ENCODE measurements at regions of chr5 and their contacts with region 1.

Region 1: GRCh38 chr5:113294311-113295110 is 140.3 kb downstream of the TSSK1B start:
- DNase-seq: peak; percentile 86
- H3K4me3 Mint-ChIP-seq: peak overlapping the region; percentile 93
- H3K27ac Mint-ChIP-seq: peak overlapping the region; percentile 79
- H3K4me1 Mint-ChIP-seq: peaks cover 27% of the 10 kb centered on the region
- H3K27me3 Mint-ChIP-seq: peaks cover 45% of the 10 kb centered on the region

Region 2: GRCh38 chr5:113022661-113023060 is 271.9 kb before region 1 on chr5:
- CTCF ChIA-PET with region 1: no interaction called
- POLR2A ChIA-PET with region 1: interaction called, 18 read pairs
- DNase-seq: no peak
- H3K4me3 Mint-ChIP-seq: peak overlapping the region; percentile 40
- H3K27ac Mint-ChIP-seq: peak overlapping the region; percentile 86
- H3K4me1 Mint-ChIP-seq: peaks cover 68% of the 10 kb centered on the region
- H3K27me3 Mint-ChIP-seq: no peaks in the 10 kb centered on the region

Region 3: DNA sequence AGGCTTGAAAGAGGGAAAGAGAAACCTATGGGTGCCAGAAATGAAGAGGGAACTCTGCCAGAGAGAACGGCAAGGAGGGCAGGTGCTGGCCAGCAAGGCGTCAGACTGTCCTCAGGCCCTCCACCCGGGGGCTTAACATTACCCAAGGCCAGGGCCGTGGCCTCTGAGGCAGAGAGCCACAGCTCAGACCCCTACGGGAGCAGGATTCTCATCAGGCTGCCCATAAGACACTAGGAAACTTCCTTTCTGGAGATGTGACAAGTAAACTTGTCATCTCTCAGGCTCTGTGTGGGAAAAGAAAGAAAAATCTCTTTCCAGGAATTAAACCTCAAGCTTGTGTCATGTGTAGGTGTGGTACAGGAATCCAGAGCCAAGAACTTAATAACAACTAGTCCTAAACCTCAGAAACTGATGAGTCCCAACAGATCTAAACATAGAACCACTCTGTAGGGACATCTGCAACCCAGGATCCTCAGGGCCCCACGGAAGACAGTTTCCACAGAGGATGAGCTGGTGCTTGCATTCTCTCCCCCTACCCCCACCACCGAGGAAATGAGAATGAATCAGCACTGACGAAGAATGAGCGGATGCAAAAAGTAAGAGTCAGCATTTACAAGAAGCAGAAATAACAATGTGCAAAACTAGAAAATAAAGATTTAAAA is 243.7 kb before region 1 on chr5:
- CTCF ChIA-PET with region 1: no interaction called
- POLR2A ChIA-PET with region 1: interaction called, 12 read pairs
- DNase-seq: peak; percentile 69
- H3K4me3 Mint-ChIP-seq: peak overlapping the region; percentile 7
- H3K27ac Mint-ChIP-seq: peak overlapping the region; percentile 89
- H3K4me1 Mint-ChIP-seq: peaks cover 45% of the 10 kb centered on the region
- H3K27me3 Mint-ChIP-seq: no peaks in the 10 kb centered on the region

Region 4: GRCh38 chr5:113330533-113331208 is 36.2 kb after region 1 on chr5:
- CTCF ChIA-PET with region 1: interaction called, 10 read pairs
- POLR2A ChIA-PET with region 1: no interaction called
- DNase-seq: no peak
- H3K4me3 Mint-ChIP-seq: no peak overlapping the region
- H3K27ac Mint-ChIP-seq: no peak overlapping the region
- H3K4me1 Mint-ChIP-seq: peaks cover 19% of the 10 kb centered on the region
- H3K27me3 Mint-ChIP-seq: peaks cover 2% of the 10 kb centered on the region